Mammary epithelial cell (primary cell): ENCODE measurements at regions of chr3 and their contacts with region 1.

Region 1: GRCh38 chr3:71305231-71306206 is 278.0 kb downstream of the FOXP1 start:
- DNase-seq: peak; percentile 39
- H3K4me3 ChIP-seq: peak overlapping the region; percentile 31 to 51 (median 40)
- H3K27ac ChIP-seq: peak overlapping the region; percentile 25
- H3K4me1 ChIP-seq: peaks cover 10% of the 10 kb centered on the region
- H3K27me3 ChIP-seq: no peaks in the 10 kb centered on the region
- CTCF ChIP-seq: no peak

Region 2: GRCh38 chr3:70531063-70531657 is 774.4 kb before region 1 on chr3:
- CTCF ChIA-PET with region 1: no interaction called
- dilution Hi-C with region 1: no loop called
- in situ Hi-C with region 1: no loop called
- intact Hi-C with region 1: loop called (anchors 1 kb)
- DNase-seq: peak; percentile 3
- H3K4me3 ChIP-seq: no peak overlapping the region
- H3K27ac ChIP-seq: no peak overlapping the region
- H3K4me1 ChIP-seq: no peaks in the 10 kb centered on the region
- H3K27me3 ChIP-seq: peaks cover 11% of the 10 kb centered on the region
- CTCF ChIP-seq: peak; percentile 51 to 55

Region 3: GRCh38 chr3:70716832-70717231 is 588.7 kb before region 1 on chr3:
- CTCF ChIA-PET with region 1: no interaction called
- dilution Hi-C with region 1: no loop called
- in situ Hi-C with region 1: no loop called
- intact Hi-C with region 1: loop called (anchors 5 kb)
- DNase-seq: peak; percentile 3
- H3K4me3 ChIP-seq: no peak overlapping the region
- H3K27ac ChIP-seq: no peak overlapping the region
- H3K4me1 ChIP-seq: no peaks in the 10 kb centered on the region
- H3K27me3 ChIP-seq: no peaks in the 10 kb centered on the region
- CTCF ChIP-seq: peak; percentile 21 to 47

Region 4: DNA sequence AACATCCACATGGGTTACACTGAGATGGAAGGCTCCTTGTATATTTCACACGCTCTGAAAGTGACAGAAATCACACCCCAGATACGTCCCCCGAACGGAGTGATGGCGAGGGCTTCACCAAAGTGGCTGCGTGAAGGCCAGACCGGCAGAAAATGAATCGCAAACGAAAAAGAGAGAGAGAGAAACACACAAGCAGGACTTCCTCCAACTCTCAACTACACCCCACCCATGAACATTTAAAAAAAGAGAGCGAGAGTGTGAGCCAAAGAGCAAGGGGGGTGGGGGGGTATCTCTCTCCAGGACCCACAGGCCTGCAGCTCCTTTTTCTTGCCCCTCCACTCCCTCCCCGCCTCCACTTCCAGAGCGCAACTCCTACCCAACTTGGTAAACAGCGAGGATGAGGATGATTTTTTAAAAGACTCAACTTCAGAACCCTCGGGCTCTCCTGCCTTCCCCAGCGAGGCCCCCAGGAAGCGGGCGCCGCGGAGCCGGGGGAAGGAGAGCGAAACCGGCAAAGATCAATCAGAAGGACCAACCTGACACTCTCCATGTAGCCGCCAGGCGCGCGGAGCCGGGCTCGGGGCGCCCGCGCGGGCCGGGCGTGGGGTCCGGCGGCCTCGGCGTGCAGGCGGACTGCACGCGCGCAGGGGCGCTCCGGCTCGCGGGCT is 241.1 kb before region 1 on chr3:
- CTCF ChIA-PET with region 1: no interaction called
- dilution Hi-C with region 1: no loop called
- in situ Hi-C with region 1: no loop called
- intact Hi-C with region 1: loop called (anchors 1 kb)
- DNase-seq: peak; percentile 65
- H3K4me3 ChIP-seq: peak overlapping the region; percentile 62 to 83 (median 63)
- H3K27ac ChIP-seq: peak overlapping the region; percentile 98
- H3K4me1 ChIP-seq: peaks cover 59% of the 10 kb centered on the region
- H3K27me3 ChIP-seq: no peaks in the 10 kb centered on the region
- CTCF ChIP-seq: peak in 1 of 2 donors; percentile 6

Region 5: GRCh38 chr3:71468311-71469137 is 163.0 kb after region 1 on chr3:
- CTCF ChIA-PET with region 1: no interaction called
- dilution Hi-C with region 1: no loop called
- in situ Hi-C with region 1: no loop called
- intact Hi-C with region 1: no loop called
- DNase-seq: no peak
- H3K4me3 ChIP-seq: no peak overlapping the region
- H3K27ac ChIP-seq: no peak overlapping the region
- H3K4me1 ChIP-seq: no peaks in the 10 kb centered on the region
- H3K27me3 ChIP-seq: no peaks in the 10 kb centered on the region
- CTCF ChIP-seq: no peak

Region 6: GRCh38 chr3:71504250-71505036 is 198.9 kb after region 1 on chr3:
- CTCF ChIA-PET with region 1: no interaction called
- dilution Hi-C with region 1: no loop called
- in situ Hi-C with region 1: no loop called
- intact Hi-C with region 1: loop called (anchors 5 kb)
- DNase-seq: peak; percentile 89
- H3K4me3 ChIP-seq: peak overlapping the region; percentile 15 to 30 (median 26)
- H3K27ac ChIP-seq: peak overlapping the region; percentile 93
- H3K4me1 ChIP-seq: peaks cover 24% of the 10 kb centered on the region
- H3K27me3 ChIP-seq: no peaks in the 10 kb centered on the region
- CTCF ChIP-seq: no peak